Vagina (tissue), 2 donors: ENCODE measurements at regions of chr4 and their contacts with region 1.

Region 1: DNA sequence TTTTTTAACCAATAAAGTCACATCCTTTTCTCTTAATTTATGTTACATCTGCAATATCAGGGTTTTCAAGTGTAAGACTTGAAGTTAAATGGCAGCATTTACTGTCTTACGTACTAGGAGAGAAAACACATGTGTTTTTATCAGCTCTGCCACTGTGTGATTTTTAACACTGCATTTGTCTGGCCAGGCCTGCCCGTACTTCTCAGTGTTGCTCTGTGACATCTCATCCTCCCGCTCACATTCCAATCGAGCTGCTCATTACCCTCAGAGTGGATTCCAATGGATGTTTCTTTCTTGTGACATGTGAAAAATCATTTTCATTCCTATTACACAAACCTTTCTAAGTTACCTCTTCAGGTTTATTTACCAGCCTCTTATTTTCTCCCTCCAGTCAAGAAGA is 420.3 kb downstream of the FAT4 start:
- DNase-seq: no peak
- H3K4me3 ChIP-seq: no peak overlapping the region
- H3K27ac ChIP-seq: no peak overlapping the region
- H3K4me1 ChIP-seq: peaks cover 6% of the 10 kb centered on the region
- H3K27me3 ChIP-seq: no peaks in the 10 kb centered on the region
- CTCF ChIP-seq: no peak
- POLR2A ChIP-seq: no peak

Region 2: GRCh38 chr4:125314676-125315575 is 420.2 kb before region 1 on chr4 and contains the start of gene FAT4:
- intact Hi-C with region 1: loop called (anchors 10 kb)
- DNase-seq: peak in 1 of 2 donors; percentile 97
- H3K4me3 ChIP-seq: peak within 1 kb of the TSS; percentile 73 to 91
- H3K27ac ChIP-seq: peak within 1 kb of the TSS; percentile 89
- H3K4me1 ChIP-seq: peaks cover 39% of the 10 kb centered on the region
- H3K27me3 ChIP-seq: no peaks in the 10 kb centered on the region
- CTCF ChIP-seq: peak in 1 of 3 experiments; percentile 17
- POLR2A ChIP-seq: peak in 1 of 2 donors; percentile 53
- total RNA-seq, gene FAT4: 9.8 TPM